Transverse colon (tissue), 4 donors: ENCODE measurements at regions of chr7 and their contacts with region 1.

Region 1: GRCh38 chr7:136693166-136694119 is 175.0 kb upstream of the CHRM2 start:
- DNase-seq: no peak
- H3K4me3 ChIP-seq: no peak overlapping the region
- H3K27ac ChIP-seq: no peak overlapping the region
- H3K4me1 ChIP-seq: no peaks in the 10 kb centered on the region
- H3K27me3 ChIP-seq: no peaks in the 10 kb centered on the region
- CTCF ChIP-seq: no peak
- EP300 ChIP-seq: no peak
- POLR2A ChIP-seq: no peak

Region 2: DNA sequence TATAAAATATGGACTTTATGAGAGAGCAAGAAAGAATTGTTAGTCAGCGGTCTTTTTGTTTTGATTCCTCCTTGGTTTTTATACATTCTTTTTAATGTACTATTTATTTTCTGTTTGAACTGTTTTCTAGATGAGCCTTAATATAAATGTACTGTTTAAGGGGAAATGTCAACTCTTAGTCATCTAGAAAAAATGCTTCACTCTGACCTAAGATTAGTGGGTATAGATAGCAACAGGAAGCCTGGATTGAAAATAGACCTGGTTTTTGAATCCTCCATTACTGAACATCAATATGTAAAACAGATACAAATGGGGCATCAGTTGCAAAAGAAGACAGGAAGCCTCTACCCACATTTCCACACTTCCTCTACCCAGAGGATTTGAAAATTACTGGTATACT is 262.8 kb after region 1 on chr7:
- in situ Hi-C with region 1: no loop called
- intact Hi-C with region 1: no loop called
- DNase-seq: no peak
- H3K4me3 ChIP-seq: no peak overlapping the region
- H3K27ac ChIP-seq: peak overlapping the region in 2 of 4 donors; percentile 11 to 29
- H3K4me1 ChIP-seq: peaks cover 0 to 5% (median 2%) of the 10 kb centered on the region in 4 donors
- H3K27me3 ChIP-seq: no peaks in the 10 kb centered on the region
- CTCF ChIP-seq: no peak
- EP300 ChIP-seq: no peak
- POLR2A ChIP-seq: no peak

Region 3: DNA sequence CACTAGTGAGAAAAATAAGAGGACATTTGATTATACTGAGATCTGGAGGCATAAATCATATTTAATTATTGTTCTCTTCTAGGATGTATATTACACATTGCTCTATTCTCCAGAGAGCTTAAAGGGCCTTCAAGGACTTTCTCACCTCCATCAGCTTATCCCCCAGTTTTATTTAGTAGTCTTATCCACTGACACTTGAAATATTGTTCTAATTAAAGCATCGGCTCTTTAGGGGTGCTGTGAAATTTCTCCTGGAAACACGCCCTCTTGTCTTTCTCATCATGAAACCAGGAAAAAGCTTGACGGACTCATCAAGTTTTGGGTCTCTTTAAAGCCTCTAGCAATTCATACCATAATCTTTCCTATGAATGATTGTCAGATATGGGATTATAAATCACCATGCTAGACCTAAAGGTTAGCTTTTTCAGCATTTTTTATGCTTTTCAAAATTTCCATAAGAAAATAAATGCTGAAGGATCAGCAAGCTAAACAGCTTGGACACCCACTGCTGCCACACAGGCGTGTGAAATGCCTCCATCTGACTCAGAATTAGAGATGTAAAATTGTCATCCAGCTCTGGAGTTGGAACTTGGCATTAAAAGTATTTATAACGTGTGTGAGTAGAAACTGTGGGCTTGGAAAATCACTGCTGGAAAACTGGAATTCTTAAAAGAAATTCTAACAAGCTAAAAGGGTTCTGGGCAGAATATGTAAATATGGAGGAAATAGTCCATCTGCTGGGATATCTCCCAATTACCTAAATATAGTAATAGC is 391.4 kb after region 1 on chr7:
- in situ Hi-C with region 1: no loop called
- intact Hi-C with region 1: loop called (anchors 5 kb)
- DNase-seq: no peak
- H3K4me3 ChIP-seq: no peak overlapping the region
- H3K27ac ChIP-seq: no peak overlapping the region
- H3K4me1 ChIP-seq: peaks cover 0 to 19% (median 2%) of the 10 kb centered on the region in 4 donors
- H3K27me3 ChIP-seq: no peaks in the 10 kb centered on the region
- CTCF ChIP-seq: no peak
- EP300 ChIP-seq: no peak
- POLR2A ChIP-seq: no peak